Ascending aorta (tissue), 2 donors: ENCODE measurements at regions of chr14 and their contacts with region 1.

Region 1: DNA sequence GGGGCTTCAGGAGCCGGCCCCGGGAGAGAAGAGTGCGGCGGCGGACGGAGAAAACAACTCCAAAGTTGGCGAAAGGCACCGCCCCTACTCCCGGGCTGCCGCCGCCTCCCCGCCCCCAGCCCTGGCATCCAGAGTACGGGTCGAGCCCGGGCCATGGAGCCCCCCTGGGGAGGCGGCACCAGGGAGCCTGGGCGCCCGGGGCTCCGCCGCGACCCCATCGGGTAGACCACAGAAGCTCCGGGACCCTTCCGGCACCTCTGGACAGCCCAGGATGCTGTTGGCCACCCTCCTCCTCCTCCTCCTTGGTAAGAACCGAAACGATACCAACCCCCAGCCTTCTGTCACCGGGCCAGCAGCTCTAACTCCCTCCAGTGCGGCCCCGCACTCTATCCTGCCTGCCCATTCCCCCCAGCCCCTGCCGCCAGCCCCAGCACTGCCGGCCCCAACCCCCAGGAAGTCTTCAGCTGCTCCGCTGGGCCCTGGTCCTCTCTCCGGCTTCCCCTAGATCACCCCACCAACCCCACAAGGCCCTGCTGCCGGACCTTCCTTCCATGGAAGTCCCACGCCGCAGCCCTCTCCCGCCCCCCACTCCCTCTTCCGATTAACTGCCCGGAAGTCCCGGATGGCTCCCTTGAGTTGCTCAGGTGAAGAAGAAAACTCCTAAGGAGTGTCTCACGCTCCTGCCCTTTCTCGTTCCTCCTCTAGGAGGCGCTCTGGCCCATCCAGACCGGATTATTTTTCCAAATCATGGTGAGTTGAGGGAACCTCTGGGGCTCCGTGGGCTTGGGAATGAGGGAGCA is 693 bp downstream of the LRP10 start:
- DNase-seq: peak in 1 of 2 donors; percentile 92
- H3K4me3 ChIP-seq: peak overlapping the region; percentile 95 to 100
- H3K27ac ChIP-seq: peak overlapping the region; percentile 99 to 100
- H3K4me1 ChIP-seq: peaks cover 12 to 24% of the 10 kb centered on the region in 2 donors
- H3K27me3 ChIP-seq: no peaks in the 10 kb centered on the region
- CTCF ChIP-seq: peak; percentile 81 to 97 (median 97)

Region 2: DNA sequence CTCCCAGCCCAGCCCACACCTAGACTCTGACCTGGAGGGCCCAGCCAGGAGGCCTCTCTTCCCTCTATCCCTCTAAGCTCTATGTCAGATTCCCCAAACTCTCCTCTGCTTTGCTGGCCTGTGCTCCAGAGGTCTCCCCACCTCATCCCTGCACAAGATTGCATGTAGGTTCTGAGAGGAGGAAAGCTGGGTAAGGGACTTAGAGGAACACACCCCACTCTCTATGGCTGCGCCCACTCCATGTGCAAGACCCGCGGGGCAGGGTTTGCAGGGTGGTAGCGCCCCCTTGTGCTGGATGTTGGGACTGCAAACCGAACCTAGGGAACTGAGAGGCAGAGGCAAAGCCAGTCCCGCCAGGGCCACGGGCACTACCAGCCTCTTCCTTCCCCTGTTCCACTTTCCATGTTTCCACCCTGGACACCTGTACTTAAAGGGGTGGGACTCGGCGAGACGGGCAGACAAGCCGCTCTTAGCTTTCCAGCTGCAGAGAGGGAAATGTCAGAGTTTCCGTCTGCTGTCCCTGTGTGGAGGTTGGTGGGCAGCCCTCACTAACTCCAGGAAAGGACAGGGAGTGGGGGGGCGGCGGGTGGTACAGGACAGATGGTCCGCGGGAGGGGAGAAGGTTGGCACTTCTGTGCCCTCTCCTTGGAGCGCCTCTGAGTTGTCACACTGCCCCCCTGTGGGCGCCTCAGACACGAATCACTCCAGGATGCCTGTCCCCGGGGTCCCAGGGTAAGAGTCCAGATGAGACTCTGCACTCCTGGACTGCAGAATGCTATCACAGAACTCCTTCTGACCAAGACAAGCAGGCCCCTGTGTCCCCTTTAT is 19.1 kb before region 1 on chr14:
- intact Hi-C with region 1: loop called (anchors 1 kb)
- DNase-seq: peak; percentile 58 to 96
- H3K4me3 ChIP-seq: peak overlapping the region; percentile 42 to 66
- H3K27ac ChIP-seq: peak overlapping the region; percentile 87 to 91
- H3K4me1 ChIP-seq: peaks cover 36 to 43% of the 10 kb centered on the region in 2 donors
- H3K27me3 ChIP-seq: no peaks in the 10 kb centered on the region
- CTCF ChIP-seq: peak; percentile 87 to 95 (median 93)

Region 3: DNA sequence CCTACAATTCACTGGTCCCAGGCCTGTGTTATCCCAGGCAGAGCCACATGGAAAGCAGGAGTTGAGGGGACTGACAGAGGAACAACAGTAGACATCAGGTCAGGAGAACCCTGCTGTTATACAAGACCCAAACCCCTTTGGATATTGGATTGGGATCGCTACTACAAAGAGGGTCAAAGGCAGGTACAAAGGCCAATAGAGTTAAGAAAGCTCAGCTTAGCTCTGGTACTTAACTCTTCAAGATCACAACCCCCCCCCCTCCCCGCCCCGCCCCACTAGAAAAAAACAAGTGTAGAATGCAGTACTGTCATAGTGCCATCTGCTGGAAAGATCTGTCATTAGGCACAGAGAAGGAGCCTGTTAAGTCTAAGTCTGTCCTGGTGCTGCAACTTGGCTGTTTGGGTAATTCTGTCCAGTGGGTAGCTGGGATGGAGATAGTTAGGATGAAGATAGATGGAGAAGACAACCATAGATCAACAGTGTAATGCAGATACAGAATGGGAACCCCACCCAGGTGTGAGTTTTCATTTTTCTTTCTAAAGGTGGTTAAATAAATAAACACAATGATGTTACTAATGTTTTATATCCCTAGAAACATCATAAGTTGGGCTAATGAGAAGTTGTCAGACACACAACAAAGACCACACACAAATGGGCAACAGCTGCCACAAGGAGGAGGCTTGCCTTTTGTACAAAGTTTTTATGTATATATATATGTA is 28.0 kb after region 1 on chr14:
- intact Hi-C with region 1: loop called (anchors 1 kb)
- DNase-seq: no peak
- H3K4me3 ChIP-seq: no peak overlapping the region
- H3K27ac ChIP-seq: peak overlapping the region in 1 of 2 donors; percentile 22
- H3K4me1 ChIP-seq: no peaks in the 10 kb centered on the region
- H3K27me3 ChIP-seq: no peaks in the 10 kb centered on the region
- CTCF ChIP-seq: peak; percentile 25 to 65 (median 48)

Region 4: DNA sequence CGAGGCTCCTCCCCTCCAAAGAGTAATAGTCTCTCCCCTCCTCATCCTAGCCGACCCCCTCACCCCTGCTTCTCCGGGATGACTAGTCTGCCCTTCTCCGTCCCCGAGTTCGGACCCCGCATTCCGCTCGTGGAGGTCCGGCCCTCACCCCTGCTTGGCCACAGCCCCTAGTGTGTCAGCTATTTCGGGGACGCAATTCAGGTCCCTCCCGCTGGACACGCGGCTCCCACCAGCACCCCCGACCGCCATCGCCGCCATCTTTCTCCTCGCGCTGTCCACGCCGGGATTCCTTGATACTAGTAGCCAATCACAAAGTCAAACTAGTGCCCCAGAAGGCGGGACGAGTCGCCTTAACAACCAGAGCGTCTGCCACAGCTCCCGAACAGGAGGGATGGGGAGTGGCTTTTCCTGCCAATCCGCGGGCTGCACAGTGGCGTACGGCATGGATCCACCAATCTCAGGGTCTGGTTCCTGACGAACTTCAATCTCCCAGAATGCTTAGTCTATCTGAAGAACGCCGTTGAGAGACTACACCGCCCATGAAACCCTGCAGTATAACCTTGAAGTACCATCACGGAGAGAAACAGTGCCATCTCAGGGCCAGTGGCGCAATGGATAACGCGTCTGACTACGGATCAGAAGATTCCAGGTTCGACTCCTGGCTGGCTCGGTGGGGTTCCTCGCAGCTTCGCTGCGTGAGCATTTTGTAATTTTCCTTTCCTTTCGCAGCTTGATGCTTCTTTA is 57.0 kb after region 1 on chr14 and contains the start of gene PRMT5:
- intact Hi-C with region 1: loop called (anchors 1 kb)
- DNase-seq: peak; percentile 99 to 100
- H3K4me3 ChIP-seq: peak within 1 kb of the TSS; percentile 85 to 87
- H3K27ac ChIP-seq: peak within 1 kb of the TSS; percentile 87 to 91
- H3K4me1 ChIP-seq: peaks cover 0 to 14% of the 10 kb centered on the region in 2 donors
- H3K27me3 ChIP-seq: no peaks in the 10 kb centered on the region
- CTCF ChIP-seq: no peak
- total RNA-seq, gene PRMT5: 118 TPM

Region 5: DNA sequence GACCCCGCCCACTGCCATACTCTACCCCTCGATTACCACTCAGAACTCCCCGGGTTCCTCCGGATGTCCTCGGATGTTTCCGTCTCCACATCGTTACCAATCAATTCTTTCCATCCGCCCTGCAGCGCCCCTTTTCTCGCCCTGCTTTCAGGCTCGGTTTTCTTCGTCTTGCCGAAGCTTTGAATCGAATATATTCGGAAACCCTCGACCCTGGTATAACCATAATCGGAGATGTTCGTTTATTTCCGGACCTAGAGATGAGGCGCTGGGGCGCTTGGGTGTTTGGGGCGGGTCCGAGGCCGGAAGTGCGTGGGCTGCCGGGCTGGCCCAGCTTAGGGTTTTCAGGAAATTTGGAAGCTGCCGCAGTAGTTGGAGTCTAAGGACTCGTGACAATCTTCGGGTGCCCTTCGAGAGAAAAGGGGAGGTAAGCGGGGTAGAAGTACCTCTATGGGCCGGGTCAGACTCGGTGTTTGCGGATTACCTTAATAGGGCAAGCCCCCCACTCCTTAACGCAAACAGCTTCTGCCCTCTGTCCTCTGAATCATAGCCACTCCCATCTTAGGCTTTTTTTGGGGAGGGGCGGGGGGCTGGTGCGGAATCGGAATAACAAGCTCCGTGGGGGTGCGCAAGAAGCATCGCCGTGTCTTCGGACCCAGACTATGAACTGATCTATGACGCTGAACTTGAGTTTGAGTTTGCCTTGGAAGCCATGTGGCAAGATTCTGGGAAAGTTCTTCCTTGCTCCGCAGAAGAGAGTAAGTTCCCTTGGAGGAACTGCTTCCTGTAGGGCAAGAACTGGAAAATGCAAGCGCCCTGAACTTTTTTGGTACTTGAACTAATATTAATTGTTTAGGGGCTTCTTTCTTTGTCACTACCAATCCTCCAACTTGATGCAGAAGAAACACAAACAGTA is 223.2 kb after region 1 on chr14 and contains the start of gene C14orf119:
- intact Hi-C with region 1: loop called (anchors 5 kb)
- DNase-seq: peak; percentile 99 to 100
- H3K4me3 ChIP-seq: peak within 1 kb of the TSS; percentile 78 to 86
- H3K27ac ChIP-seq: peak within 1 kb of the TSS; percentile 97 to 98
- H3K4me1 ChIP-seq: peaks cover 0 to 22% of the 10 kb centered on the region in 2 donors
- H3K27me3 ChIP-seq: no peaks in the 10 kb centered on the region
- CTCF ChIP-seq: no peak
- total RNA-seq, gene C14orf119: 2.2 TPM